ENCODE measurements at regions of chr7 and their contacts with region 1.

Region 1: GRCh38 chr7:155344600-155345433 is 47.1 kb downstream of the INSIG1 start:
- DNase-seq: peak; percentile 82
- ATAC-seq: peak; percentile 86
- H3K4me3 Mint-ChIP-seq: peak overlapping the region; percentile 60
- H3K27ac Mint-ChIP-seq: no peak overlapping the region
- H3K4me1 Mint-ChIP-seq: no peaks in the 10 kb centered on the region
- H3K27me3 Mint-ChIP-seq: peaks cover 11% of the 10 kb centered on the region
- CTCF ChIP-seq: peak; percentile 97

Region 2: DNA sequence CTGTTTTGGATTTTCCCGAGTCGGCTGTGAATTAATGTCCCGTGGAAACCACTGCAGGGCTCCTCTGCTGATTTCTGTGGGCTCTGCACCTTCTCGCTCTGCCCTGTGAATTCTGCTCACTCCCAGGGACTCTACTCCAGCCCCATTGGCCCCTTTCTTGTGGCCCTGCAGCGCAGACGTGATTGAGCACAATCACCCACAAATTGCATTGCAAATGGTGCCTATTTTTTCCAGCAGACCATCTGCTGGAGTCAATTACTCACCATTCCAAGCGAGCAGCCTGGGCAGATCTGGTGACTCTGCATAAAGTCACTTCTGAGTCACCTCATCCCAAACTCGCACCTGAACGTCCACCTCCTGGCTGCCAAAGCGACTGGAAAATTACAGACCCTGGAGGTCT is 577.7 kb before region 1 on chr7:
- CTCF ChIA-PET with region 1: no interaction called
- POLR2A ChIA-PET with region 1: no interaction called
- DNase-seq: no peak
- ATAC-seq: no peak
- H3K4me3 Mint-ChIP-seq: no peak overlapping the region
- H3K27ac Mint-ChIP-seq: no peak overlapping the region
- H3K4me1 Mint-ChIP-seq: no peaks in the 10 kb centered on the region
- H3K27me3 Mint-ChIP-seq: peaks cover 18% of the 10 kb centered on the region
- CTCF ChIP-seq: no peak

Region 3: DNA sequence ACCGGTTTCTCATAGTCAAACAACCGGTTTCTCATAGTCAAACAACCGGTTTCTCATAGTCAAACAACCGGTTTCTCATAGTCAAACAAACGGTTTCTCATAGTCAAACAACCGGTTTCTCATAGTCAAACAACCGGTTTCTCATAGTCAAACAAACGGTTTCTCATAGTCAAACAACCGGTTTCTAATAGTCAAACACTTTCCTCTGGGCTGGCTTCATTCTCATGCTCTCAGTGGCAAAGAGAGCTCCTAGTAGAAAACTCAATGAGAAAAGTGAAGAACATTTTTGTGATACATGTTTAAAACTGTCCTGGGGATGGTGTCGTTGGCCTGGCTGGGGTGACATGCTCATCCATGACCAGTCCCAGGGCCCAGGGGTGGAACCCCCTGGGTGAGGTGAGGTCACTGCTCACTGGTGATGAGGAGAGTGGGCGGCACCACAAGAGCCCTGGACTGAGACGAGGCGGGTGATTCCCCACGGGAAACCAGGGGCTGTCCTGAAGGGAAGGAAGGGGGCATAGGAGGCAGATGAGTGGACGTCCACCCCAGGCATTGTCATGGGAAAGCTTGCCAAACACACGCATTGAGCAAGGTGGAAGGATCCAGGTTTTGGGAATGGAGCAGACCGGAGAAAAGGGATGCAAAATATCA is 220.2 kb before region 1 on chr7:
- CTCF ChIA-PET with region 1: no interaction called
- POLR2A ChIA-PET with region 1: no interaction called
- DNase-seq: no peak
- ATAC-seq: no peak
- H3K4me3 Mint-ChIP-seq: no peak overlapping the region
- H3K27ac Mint-ChIP-seq: no peak overlapping the region
- H3K4me1 Mint-ChIP-seq: peaks cover 7% of the 10 kb centered on the region; the same call in 1 of the 2 replicates
- H3K27me3 Mint-ChIP-seq: no peaks in the 10 kb centered on the region; the same call in 1 of the 2 replicates
- CTCF ChIP-seq: no peak

Region 4: GRCh38 chr7:155333346-155334234 is 11.2 kb before region 1 on chr7:
- CTCF ChIA-PET with region 1: interaction called, 10 read pairs
- POLR2A ChIA-PET with region 1: no interaction called
- DNase-seq: no peak
- ATAC-seq: no peak
- H3K4me3 Mint-ChIP-seq: no peak overlapping the region
- H3K27ac Mint-ChIP-seq: no peak overlapping the region
- H3K4me1 Mint-ChIP-seq: no peaks in the 10 kb centered on the region
- H3K27me3 Mint-ChIP-seq: no peaks in the 10 kb centered on the region
- CTCF ChIP-seq: no peak

Measured in WTC11 (cell line).